Gastrocnemius medialis (tissue), 4 donors: ENCODE measurements at regions of chr2 and their contacts with region 1.

Region 1: GRCh38 chr2:178478439-178479274 is at the start of gene FKBP7:
- DNase-seq: peak; percentile 78 to 80
- ATAC-seq: peak; percentile 60 to 69
- H3K4me3 ChIP-seq: peak within 1 kb of the TSS; percentile 61 to 80 (median 74)
- H3K27ac ChIP-seq: peak within 1 kb of the TSS; percentile 84 to 95 (median 92)
- H3K4me1 ChIP-seq: peaks cover 35 to 38% of the 10 kb centered on the region in 2 donors
- H3K27me3 ChIP-seq: no peaks in the 10 kb centered on the region
- CTCF ChIP-seq: peak; percentile 59 to 79 (median 69)
- POLR2A ChIP-seq: peak; percentile 84 to 87
- total RNA-seq, gene FKBP7: 1.4 to 5.0 (median 3.3) TPM

Region 2: GRCh38 chr2:178191004-178191508 is 287.6 kb before region 1 on chr2:
- in situ Hi-C with region 1: no loop called
- intact Hi-C with region 1: no loop called
- DNase-seq: no peak
- ATAC-seq: no peak
- H3K4me3 ChIP-seq: no peak overlapping the region
- H3K27ac ChIP-seq: no peak overlapping the region
- H3K4me1 ChIP-seq: peaks cover 10 to 11% of the 10 kb centered on the region in 2 donors
- H3K27me3 ChIP-seq: no peaks in the 10 kb centered on the region
- CTCF ChIP-seq: no peak
- POLR2A ChIP-seq: no peak

Region 3: DNA sequence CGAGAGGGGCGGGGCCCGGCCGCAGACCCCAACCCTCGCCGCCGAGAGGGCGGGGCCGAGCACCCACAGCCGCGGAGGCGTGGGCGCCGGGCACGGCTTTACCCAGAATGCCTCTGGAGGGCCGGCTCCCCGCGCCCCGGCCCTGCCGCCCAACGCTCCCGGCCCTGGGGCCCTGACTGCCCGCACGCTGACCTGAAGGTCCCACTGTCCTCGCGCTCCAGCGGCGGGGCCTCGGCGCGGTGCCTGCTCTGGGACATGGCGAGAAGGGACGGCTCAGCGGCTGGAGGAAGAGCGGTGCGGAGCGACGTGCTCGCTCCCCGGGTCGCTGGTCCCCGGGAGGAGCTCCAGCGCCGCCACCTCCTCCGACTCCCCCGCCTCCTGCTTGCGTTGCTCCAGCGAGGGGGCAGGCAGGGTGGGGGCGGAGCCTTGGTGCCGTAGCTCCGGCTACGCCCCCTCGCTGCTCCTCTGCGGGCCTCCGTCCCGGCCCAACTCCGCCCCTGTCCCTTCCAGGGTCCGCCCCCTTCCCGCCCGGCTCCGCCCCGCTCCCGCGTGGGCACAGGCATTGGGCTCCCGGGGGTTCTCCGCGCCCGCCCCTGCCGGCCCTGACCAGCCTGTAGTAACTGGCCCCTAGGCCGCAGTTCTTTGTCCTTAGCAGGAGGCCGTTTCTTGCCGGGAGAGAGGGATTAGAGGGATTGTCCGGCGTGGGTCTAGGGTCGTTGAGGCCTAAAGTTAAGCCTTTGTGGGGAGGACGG is 27.7 kb before region 1 on chr2 and contains the starts of genes PJVK and PRKRA:
- in situ Hi-C with region 1: no loop called
- intact Hi-C with region 1: loop called (anchors 1 kb)
- DNase-seq: peak; percentile 96 to 97
- ATAC-seq: peak; percentile 82 to 84
- H3K4me3 ChIP-seq: peak within 1 kb of the TSS; percentile 69 to 97 (median 90)
- H3K27ac ChIP-seq: peak within 1 kb of the TSS; percentile 88 to 100 (median 98)
- H3K4me1 ChIP-seq: peaks cover 26 to 27% of the 10 kb centered on the region in 2 donors
- H3K27me3 ChIP-seq: no peaks in the 10 kb centered on the region
- CTCF ChIP-seq: peak in 1 of 5 experiments; percentile 17
- POLR2A ChIP-seq: peak; percentile 97
- total RNA-seq, gene PJVK: 0.16 to 3.9 (median 1.0) TPM
- total RNA-seq, gene PRKRA: 91.0 to 125 (median 117) TPM

Region 4: GRCh38 chr2:178522950-178523595 is 44.4 kb after region 1 on chr2:
- in situ Hi-C with region 1: no loop called
- intact Hi-C with region 1: loop called (anchors 2 kb)
- DNase-seq: peak; percentile 66 to 80
- ATAC-seq: peak; percentile 58 to 74
- H3K4me3 ChIP-seq: peak overlapping the region; percentile 48 to 61 (median 60)
- H3K27ac ChIP-seq: peak overlapping the region; percentile 70 to 90 (median 80)
- H3K4me1 ChIP-seq: peaks cover 0 to 3% of the 10 kb centered on the region in 2 donors
- H3K27me3 ChIP-seq: no peaks in the 10 kb centered on the region
- CTCF ChIP-seq: peak; percentile 68 to 76 (median 74)
- POLR2A ChIP-seq: peak in 1 of 2 donors; percentile 22